ENCODE measurements at regions of chr9 and their contacts with region 1.

Region 1: GRCh38 chr9:109903515-109904138 is 123.6 kb downstream of the PALM2AKAP2 start:
- DNase-seq: peak; percentile 44 to 72 (median 58)
- H3K4me3 ChIP-seq: no peak overlapping the region
- H3K4me3 Mint-ChIP-seq: no peak overlapping the region
- H3K27ac ChIP-seq: no peak overlapping the region
- H3K27ac Mint-ChIP-seq: no peak overlapping the region
- H3K4me1 ChIP-seq: no peaks in the 10 kb centered on the region
- H3K4me1 Mint-ChIP-seq: peaks cover 7% of the 10 kb centered on the region
- H3K27me3 ChIP-seq: no peaks in the 10 kb centered on the region
- H3K27me3 Mint-ChIP-seq: peaks cover 3 to 5% (median 4%) of the 10 kb centered on the region in 3 donors
- CTCF ChIP-seq: peak; percentile 88

Region 2: GRCh38 chr9:109831998-109832658 is 71.5 kb before region 1 on chr9:
- intact Hi-C with region 1: no loop called
- DNase-seq: no peak
- H3K4me3 ChIP-seq: no peak overlapping the region
- H3K4me3 Mint-ChIP-seq: no peak overlapping the region
- H3K27ac ChIP-seq: no peak overlapping the region
- H3K27ac Mint-ChIP-seq: no peak overlapping the region
- H3K4me1 ChIP-seq: no peaks in the 10 kb centered on the region
- H3K4me1 Mint-ChIP-seq: no peaks in the 10 kb centered on the region
- H3K27me3 ChIP-seq: peaks cover 0 to 6% of the 10 kb centered on the region in 2 donors
- H3K27me3 Mint-ChIP-seq: peaks cover 11 to 17% (median 16%) of the 10 kb centered on the region in 3 donors
- CTCF ChIP-seq: no peak

Region 3: GRCh38 chr9:110058304-110058953 is 154.8 kb after region 1 on chr9:
- intact Hi-C with region 1: loop called (anchors 2 to 5 kb)
- DNase-seq: peak in 2 of 3 donors; percentile 45 to 63
- H3K4me3 ChIP-seq: no peak overlapping the region
- H3K4me3 Mint-ChIP-seq: peak overlapping the region in 1 of 2 donors; percentile 35
- H3K27ac ChIP-seq: no peak overlapping the region
- H3K27ac Mint-ChIP-seq: peak overlapping the region in 1 of 7 donors; percentile 31
- H3K4me1 ChIP-seq: peaks cover 4 to 7% of the 10 kb centered on the region in 2 donors
- H3K4me1 Mint-ChIP-seq: peaks cover 10% of the 10 kb centered on the region
- H3K27me3 ChIP-seq: no peaks in the 10 kb centered on the region
- H3K27me3 Mint-ChIP-seq: no peaks in the 10 kb centered on the region
- CTCF ChIP-seq: peak; percentile 73

Region 4: DNA sequence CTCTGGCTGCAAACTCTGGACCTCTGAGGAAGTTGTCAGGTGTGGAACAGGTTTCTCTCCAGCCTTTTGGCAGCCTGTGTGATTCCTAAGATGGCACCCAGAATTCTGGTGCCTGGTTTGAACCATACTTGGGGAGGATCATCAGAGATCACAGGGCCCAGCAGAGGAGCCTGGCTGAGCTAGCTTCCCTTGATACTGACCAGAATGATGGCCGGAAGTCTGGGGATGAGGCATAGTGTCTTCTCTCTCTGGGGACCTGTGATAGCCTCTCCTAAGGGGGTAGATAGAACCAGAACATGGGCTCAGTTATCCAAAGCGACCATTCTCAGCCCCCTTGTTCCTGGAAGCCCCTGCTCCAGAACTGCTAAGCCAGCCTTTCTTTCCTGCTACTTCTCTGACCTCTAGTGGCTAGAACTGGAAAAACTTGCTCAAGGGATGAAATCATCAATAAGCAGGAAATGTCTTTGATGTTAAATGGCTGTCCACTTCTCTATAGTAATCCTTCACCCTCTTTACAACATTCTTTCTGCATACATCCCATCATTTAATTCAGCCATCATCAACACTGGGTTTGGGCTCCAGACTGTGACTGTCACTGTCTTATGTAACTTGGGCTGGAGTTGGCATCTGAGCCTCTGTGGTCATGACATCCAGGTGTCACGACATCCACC is 249.2 kb after region 1 on chr9:
- intact Hi-C with region 1: loop called (anchors 1 to 5 kb)
- DNase-seq: peak; percentile 18 to 60 (median 56)
- H3K4me3 ChIP-seq: no peak overlapping the region
- H3K4me3 Mint-ChIP-seq: no peak overlapping the region
- H3K27ac ChIP-seq: peak overlapping the region in 1 of 2 donors; percentile 26
- H3K27ac Mint-ChIP-seq: peak overlapping the region in 2 of 7 donors; percentile 82 to 85
- H3K4me1 ChIP-seq: peaks cover 49 to 52% of the 10 kb centered on the region in 2 donors
- H3K4me1 Mint-ChIP-seq: peaks cover 66% of the 10 kb centered on the region
- H3K27me3 ChIP-seq: no peaks in the 10 kb centered on the region
- H3K27me3 Mint-ChIP-seq: peaks cover 0 to 3% (median 1%) of the 10 kb centered on the region in 3 donors
- CTCF ChIP-seq: peak; percentile 92

Region 5: GRCh38 chr9:110217656-110218099 is 314.1 kb after region 1 on chr9:
- intact Hi-C with region 1: loop called in 1 of 2 experiments (anchors 5 kb)
- DNase-seq: peak in 2 of 3 donors; percentile 23 to 42
- H3K4me3 ChIP-seq: no peak overlapping the region
- H3K4me3 Mint-ChIP-seq: no peak overlapping the region
- H3K27ac ChIP-seq: no peak overlapping the region
- H3K27ac Mint-ChIP-seq: no peak overlapping the region
- H3K4me1 ChIP-seq: no peaks in the 10 kb centered on the region
- H3K4me1 Mint-ChIP-seq: peaks cover 2% of the 10 kb centered on the region
- H3K27me3 ChIP-seq: no peaks in the 10 kb centered on the region
- H3K27me3 Mint-ChIP-seq: no peaks in the 10 kb centered on the region
- CTCF ChIP-seq: peak; percentile 87